ENCODE measurements at regions of chr10 and their contacts with region 1.

Region 1: DNA sequence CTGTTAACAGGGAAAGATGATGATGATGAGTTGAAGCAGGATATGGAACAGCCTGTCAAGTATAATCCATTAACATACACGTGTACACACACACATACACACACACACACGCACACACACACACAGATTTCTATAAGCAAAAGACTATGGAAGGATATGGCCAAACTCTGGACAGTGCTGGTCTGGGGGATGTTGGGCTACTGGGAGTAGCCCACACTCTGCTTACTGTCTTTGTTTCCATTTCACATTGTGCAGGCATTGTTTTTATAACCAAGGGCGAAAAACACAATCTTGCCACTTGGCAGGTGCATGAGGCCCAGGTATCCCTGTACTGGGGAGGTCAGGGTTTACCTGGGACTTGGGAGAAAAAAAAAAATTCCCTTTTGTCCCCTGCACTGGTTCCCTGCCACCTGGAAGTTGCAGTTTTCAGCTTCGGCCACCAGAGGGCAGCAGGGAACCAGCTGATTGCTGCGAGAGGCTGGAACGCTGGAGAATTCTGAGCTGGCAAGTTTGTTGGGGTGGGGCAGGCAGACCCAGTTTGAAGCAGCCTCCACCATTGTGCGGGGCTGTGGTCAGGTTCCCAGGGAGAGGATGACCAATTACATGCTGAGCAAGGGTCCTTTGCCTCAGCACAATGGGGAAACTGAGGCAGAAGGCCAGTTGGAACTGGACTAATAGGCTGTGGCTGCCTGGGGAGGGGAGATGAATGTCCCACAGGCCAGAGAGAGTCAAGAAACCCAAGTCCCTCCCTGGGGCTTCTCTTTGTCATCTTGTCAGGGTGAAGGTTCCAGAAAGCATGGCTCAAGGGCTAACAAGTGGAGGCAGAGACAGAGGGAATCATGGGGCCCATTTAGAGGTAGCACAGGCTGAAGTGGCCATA is 27.3 kb downstream of the PPIF start:
- DNase-seq: peak; percentile 71 to 90 (median 81)
- H3K4me3 ChIP-seq: no peak overlapping the region
- H3K27ac ChIP-seq: no peak overlapping the region
- H3K4me1 ChIP-seq: peaks cover 0 to 5% of the 10 kb centered on the region in 2 donors
- H3K27me3 ChIP-seq: no peaks in the 10 kb centered on the region
- CTCF ChIP-seq: peak; percentile 93 to 98 (median 96)
- POLR2A ChIP-seq: no peak

Region 2: DNA sequence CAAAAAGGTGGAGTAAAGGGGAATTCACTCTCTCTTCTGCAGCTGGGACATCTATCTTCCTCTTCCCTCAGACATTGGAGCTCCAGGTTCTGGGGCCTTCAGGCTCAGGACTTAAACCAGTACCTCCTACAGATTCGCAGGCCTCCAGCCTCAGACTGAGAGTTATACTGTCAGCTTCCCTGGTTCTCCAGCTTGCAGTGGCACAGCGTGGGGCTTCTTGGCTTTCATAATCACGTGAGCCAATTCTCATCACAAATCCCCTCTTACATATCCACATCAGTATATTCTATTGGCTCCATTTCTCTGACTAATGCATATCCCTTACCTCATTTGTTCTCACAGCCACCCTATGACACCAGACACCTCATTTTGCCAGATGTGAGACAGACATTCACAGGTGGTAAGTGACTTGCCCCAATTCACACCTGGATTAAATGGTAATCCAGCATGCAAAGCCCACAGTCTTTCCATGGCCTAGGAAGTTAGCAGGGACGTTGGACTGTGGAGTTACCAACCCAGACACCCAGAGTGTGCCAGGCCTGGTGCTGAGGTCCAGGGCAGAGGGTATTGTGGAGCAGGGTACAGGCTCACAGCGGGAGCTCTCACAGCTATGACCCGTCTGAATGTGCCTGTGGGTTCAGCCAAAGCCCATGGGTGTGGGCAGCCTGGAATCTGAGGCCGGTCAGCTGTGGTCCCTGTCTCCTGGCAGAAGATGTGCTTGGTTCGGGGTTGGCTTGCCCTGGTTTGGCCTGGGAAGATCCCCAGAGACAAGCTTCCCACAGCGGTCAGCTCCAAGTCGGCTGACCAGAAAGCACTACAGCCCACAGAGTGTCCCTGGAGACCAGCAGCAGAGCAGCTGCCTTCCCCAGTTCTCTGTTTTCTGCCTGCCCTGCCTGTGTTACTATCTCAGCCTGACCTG is 89.3 kb after region 1 on chr10:
- intact Hi-C with region 1: loop called (anchors 5 kb)
- DNase-seq: peak in 5 of 7 donors; percentile 26 to 76 (median 48)
- H3K4me3 ChIP-seq: no peak overlapping the region
- H3K27ac ChIP-seq: peak overlapping the region in 2 of 5 donors; percentile 7 to 57
- H3K4me1 ChIP-seq: peaks cover 0 to 34% of the 10 kb centered on the region in 2 donors
- H3K27me3 ChIP-seq: no peaks in the 10 kb centered on the region
- CTCF ChIP-seq: no peak
- POLR2A ChIP-seq: no peak

Region 3: DNA sequence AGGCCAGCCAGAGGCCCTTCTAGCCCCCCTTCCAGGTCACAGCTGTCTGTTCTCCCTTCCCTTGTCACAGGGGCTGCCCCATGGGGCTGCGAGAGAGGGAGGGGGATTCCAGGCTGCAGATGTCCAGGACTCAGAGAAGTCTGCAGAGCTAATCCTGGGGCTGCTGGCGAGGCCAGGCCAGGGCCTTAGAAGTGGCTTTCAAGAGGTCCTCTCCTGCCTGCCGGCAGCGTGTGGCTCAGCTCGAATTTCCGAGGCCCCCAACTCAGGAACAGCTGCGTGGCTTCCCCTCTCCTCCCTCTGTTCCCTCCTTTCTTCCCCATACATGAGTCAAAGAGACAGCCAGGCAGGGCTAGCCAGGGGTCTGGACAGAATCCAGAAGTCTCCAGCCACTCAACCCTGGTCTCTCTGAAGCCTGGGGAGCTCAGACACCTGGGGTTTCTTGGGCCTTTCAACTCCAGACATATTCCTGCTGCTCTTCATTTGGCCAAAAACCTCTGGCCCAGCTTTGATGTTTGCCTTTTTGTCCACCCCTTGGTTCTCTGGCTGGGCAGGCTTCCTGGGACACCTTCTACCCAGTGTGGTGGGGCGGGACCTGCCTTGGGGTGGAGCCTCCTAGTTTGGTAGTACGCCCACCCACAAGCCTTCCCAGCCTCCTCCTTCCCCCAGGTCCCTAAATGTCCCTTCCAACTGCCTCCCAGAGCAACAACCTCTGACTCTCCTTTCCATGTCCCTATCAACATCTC is 116.0 kb after region 1 on chr10:
- intact Hi-C with region 1: loop called (anchors 5 to 10 kb)
- DNase-seq: peak in 2 of 7 donors; percentile 24 to 51
- H3K4me3 ChIP-seq: no peak overlapping the region
- H3K27ac ChIP-seq: peak overlapping the region in 2 of 5 donors; percentile 21 to 33
- H3K4me1 ChIP-seq: peaks cover 0 to 9% of the 10 kb centered on the region in 2 donors
- H3K27me3 ChIP-seq: no peaks in the 10 kb centered on the region
- CTCF ChIP-seq: no peak
- POLR2A ChIP-seq: no peak